Ovary (tissue), 10 donors: ENCODE measurements at regions of chr19 and their contacts with region 1.

Region 1: GRCh38 chr19:6056801-6057650 is 53.3 kb downstream of the RFX2 start:
- DNase-seq: peak; percentile 82 to 92 (median 84)
- H3K4me3 ChIP-seq: no peak overlapping the region
- H3K27ac ChIP-seq: peak overlapping the region; percentile 72 to 94
- H3K4me1 ChIP-seq: peaks cover 24% of the 10 kb centered on the region
- H3K27me3 ChIP-seq: no peaks in the 10 kb centered on the region
- CTCF ChIP-seq: no peak
- EP300 ChIP-seq: no peak
- POLR2A ChIP-seq: peak; percentile 79

Region 2: DNA sequence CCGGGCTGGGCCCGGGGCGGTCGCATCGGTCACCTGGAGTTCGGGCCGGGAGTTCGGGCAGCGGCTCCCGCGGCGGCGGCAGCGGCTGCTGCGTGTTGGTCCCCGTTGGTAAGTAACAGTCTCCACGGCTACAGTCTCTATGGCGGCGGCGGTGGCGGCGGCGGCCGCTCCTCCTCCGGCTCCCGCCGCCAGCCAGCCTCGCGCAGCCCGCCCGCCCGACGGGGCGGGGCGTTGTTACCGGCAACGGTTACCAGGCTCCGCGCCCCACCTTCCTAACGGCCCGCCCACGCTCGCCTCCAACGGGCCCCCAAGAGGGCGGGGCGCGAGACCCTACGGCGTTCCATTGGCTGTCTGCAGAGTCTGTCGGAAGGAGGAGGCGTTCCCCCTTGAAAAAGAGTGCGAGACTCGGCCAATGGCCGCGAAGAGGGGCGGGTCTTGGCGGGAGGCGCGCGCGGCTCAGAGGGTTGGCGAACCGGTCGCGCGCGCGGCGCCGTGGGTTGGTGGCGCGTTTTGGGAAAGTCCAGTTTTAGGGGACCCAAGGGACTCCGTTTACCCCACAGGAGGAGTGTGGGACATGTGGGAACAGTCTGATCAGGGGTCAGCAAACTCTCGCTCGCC is 53.4 kb after region 1 on chr19 and contains the start of gene RFX2:
- intact Hi-C with region 1: loop called (anchors 2 to 5 kb)
- DNase-seq: peak; percentile 99
- H3K4me3 ChIP-seq: peak within 1 kb of the TSS; percentile 85
- H3K27ac ChIP-seq: peak within 1 kb of the TSS; percentile 2 to 49
- H3K4me1 ChIP-seq: no peaks in the 10 kb centered on the region
- H3K27me3 ChIP-seq: no peaks in the 10 kb centered on the region
- CTCF ChIP-seq: no peak
- EP300 ChIP-seq: peak; percentile 38
- POLR2A ChIP-seq: peak; percentile 70
- total RNA-seq, gene RFX2: 9.7 to 31.2 (median 14.1) TPM

Region 3: GRCh38 chr19:6199240-6199983 is 142.4 kb after region 1 on chr19:
- intact Hi-C with region 1: no loop called
- DNase-seq: peak; percentile 99 to 100 (median 99)
- H3K4me3 ChIP-seq: peak overlapping the region; percentile 49
- H3K27ac ChIP-seq: no peak overlapping the region
- H3K4me1 ChIP-seq: no peaks in the 10 kb centered on the region
- H3K27me3 ChIP-seq: no peaks in the 10 kb centered on the region
- CTCF ChIP-seq: peak; percentile 14 to 78 (median 76)
- EP300 ChIP-seq: no peak
- POLR2A ChIP-seq: no peak

Region 4: DNA sequence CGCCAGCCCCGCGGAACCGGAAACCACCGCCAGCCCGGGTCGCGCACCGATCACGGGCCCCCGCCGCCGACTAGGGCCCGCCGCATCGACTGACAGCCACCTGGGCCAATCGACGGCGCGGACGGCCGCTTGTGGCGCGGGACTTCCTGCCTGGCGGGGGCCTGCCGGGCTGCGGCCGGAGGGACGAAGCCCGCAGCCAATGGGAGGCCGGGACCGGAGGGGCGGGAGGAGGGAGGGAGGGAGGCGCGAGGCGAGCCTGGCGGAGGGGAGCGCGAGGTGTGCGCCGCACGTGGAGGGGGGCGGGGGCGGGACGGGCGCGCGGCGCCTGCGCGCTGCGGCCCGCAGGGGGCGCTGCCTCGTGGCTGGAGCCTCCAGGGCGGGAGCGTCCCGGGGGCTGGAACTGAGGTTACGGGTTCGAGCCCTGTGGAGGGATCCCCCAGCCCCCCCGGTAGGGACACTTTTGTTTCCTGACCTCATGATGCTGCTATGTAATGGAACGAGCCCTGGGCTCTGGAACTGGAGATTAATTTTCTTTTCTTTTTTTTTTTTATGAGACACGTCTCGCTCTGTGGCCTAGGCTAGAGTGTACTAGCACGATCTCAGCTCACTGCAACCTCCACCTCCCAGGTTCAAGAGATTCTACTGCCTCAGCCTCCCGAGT is 223.0 kb after region 1 on chr19 and contains the start of gene MLLT1:
- intact Hi-C with region 1: loop called in 1 of 4 experiments (anchors 10 kb)
- DNase-seq: peak; percentile 97 to 99 (median 98)
- H3K4me3 ChIP-seq: peak within 1 kb of the TSS; percentile 66
- H3K27ac ChIP-seq: peak within 1 kb of the TSS; percentile 79 to 91
- H3K4me1 ChIP-seq: peaks cover 23% of the 10 kb centered on the region
- H3K27me3 ChIP-seq: no peaks in the 10 kb centered on the region
- CTCF ChIP-seq: peak; percentile 47 to 72 (median 56)
- EP300 ChIP-seq: no peak
- POLR2A ChIP-seq: peak; percentile 43
- total RNA-seq, gene MLLT1: 16.3 to 116 (median 95.8) TPM